ENCODE measurements at regions of chr14 and their contacts with region 1.

Region 1: DNA sequence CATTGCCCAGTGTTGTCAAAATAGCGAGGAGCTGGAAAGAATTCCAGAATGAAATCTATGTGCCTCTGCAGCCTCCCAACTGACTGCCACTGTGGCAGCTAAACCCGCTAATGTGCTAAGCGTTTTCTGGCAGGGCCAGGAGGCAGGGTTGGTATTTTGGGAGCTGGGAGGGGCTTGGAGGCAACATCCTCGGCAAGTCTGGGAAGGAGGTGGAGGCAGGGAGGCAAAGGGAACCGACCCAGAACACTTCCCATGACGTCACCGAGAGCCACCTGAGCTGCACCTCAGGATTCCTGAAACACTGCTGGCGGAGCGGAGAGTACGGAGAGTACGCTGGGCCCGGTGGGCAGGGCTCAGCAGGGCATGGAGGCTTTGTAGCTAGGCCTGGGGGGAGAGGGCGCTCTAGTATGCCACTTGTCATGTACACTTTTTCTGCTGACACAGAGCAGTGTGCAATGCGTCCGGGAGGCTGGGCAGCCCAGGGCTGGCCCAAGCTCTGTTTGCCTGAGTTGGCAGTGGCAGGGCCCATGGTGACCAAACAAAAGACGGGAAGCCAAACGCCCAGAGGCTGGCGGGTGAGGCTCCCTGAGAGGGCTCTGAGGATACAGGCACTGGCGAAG is 81.5 kb downstream of the DPF3 start:
- DNase-seq: peak; percentile 78
- ATAC-seq: peak; percentile 94

Region 2: GRCh38 chr14:72781476-72782181 is 30.8 kb before region 1 on chr14:
- intact Hi-C with region 1: no loop called
- DNase-seq: no peak
- ATAC-seq: no peak

Region 3: DNA sequence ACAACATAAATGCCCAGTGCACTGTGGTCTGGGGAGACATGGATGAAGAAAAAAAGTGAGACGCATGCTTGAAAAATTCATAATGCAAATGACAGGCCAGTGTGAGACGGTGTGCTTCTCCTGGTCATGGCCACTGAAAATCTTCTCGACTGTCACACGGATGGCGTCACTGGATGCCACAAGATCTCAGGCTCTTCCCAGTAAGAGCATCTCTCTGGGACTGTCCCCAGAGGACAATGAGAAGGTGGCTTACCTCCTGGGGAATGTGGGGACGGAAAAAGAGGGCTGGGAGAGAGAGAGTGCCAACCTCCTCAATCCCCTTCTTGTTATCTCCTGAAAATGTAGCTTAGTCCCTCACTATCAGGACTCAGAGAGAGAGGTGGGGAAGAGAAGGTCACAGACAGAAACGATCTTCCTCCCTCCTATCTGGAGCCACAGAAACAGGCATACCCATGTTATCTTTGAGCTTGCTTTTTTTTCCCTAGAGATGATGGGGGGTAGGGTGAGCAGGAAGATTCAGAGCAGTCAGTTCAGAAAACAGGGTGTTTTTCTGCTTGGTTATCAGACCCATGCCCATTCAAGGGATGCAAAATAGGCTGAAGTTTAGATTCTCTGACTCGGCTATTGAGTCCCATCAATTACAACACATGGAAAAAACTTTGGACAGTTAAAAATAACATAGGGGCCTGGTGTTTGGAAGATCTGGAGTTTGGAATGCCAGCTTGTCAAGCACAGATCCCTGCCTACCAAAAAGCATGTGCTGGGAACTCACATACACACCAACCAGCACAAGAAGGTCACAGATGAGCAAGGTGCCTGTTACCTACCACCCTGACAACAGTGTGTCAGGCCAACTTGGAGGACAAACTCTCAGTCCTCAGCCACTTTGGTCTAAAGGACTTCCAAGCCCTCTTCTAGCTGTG is 57.3 kb after region 1 on chr14:
- intact Hi-C with region 1: loop called (anchors 2 kb)
- DNase-seq: no peak
- ATAC-seq: peak; percentile 82

Region 4: GRCh38 chr14:72893636-72894321 is 81.4 kb after region 1 on chr14 and contains the start of gene DPF3:
- intact Hi-C with region 1: loop called (anchors 1 kb)
- DNase-seq: peak; percentile 98
- ATAC-seq: peak; percentile 98
- total RNA-seq, gene DPF3: 27.3 TPM

Measured in Right ventricle myocardium inferior (tissue), 1 donor.